Right cardiac atrium (tissue), 5 donors: ENCODE measurements at regions of chr2 and their contacts with region 1.

Region 1: GRCh38 chr2:37877457-37878315 is 47.4 kb upstream of the RMDN2 start:
- DNase-seq: no peak
- ATAC-seq: peak; percentile 65 to 71
- H3K4me3 ChIP-seq: no peak overlapping the region
- H3K27ac ChIP-seq: no peak overlapping the region
- H3K4me1 ChIP-seq: peaks cover 20% of the 10 kb centered on the region
- H3K27me3 ChIP-seq: no peaks in the 10 kb centered on the region

Region 2: GRCh38 chr2:37394796-37395555 is 482.7 kb before region 1 on chr2:
- intact Hi-C with region 1: loop called in 3 of 4 experiments (anchors 5 kb)
- DNase-seq: no peak
- ATAC-seq: peak; percentile 39 to 88
- H3K4me3 ChIP-seq: no peak overlapping the region
- H3K27ac ChIP-seq: no peak overlapping the region
- H3K4me1 ChIP-seq: no peaks in the 10 kb centered on the region
- H3K27me3 ChIP-seq: no peaks in the 10 kb centered on the region

Region 3: DNA sequence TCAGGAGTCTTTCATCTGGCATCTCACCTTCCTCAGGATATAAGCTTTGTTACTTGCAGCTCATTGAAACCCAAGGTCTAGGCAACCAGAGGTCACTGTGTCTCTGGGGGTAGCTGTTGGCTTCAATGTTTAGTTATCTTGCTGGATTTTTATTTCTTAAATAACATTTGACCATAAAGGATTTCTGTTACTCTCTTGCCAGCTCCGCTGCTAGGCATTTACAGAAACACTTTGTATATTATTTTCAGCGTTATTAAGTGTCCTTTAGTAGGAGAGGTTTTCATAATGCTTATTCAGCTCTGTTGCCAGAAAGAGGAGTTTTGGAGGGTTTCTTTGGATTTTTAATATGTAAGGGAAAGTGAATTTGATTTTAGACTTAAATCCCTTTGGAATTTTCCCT is 471.9 kb before region 1 on chr2:
- intact Hi-C with region 1: loop called in 3 of 4 experiments (anchors 5 kb)
- DNase-seq: no peak
- ATAC-seq: no peak
- H3K4me3 ChIP-seq: no peak overlapping the region
- H3K27ac ChIP-seq: no peak overlapping the region
- H3K4me1 ChIP-seq: no peaks in the 10 kb centered on the region
- H3K27me3 ChIP-seq: no peaks in the 10 kb centered on the region

Region 4: DNA sequence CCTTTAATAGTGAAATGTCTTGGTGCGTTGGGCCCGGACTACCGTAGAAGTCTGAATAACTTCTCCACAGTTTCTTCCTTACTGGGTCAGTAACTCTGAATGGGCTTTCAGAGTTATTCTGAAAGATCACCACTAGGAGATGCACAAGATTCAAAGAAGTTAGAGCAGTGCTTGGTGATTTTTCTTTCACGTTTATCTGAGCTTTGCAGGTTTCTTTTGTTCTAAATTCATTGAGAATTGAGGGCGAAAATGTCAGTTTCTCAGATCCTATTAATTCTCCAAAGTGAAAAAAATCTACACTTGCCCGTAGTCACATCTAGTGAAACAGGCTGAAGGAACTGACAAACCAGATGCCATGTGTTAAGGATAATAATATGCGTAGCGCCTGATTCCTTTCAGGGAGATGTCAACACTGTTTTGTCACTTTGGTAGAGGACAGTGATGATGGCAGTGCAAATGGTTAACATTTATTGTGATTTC is 463.2 kb before region 1 on chr2:
- intact Hi-C with region 1: loop called in 3 of 4 experiments (anchors 5 kb)
- DNase-seq: no peak
- ATAC-seq: peak; percentile 75 to 85
- H3K4me3 ChIP-seq: no peak overlapping the region
- H3K27ac ChIP-seq: no peak overlapping the region
- H3K4me1 ChIP-seq: peaks cover 2% of the 10 kb centered on the region
- H3K27me3 ChIP-seq: no peaks in the 10 kb centered on the region

Region 5: GRCh38 chr2:37558623-37559022 is 319.1 kb before region 1 on chr2:
- intact Hi-C with region 1: loop called in 1 of 4 experiments (anchors 10 kb)
- DNase-seq: peak in 2 of 3 donors; percentile 18 to 56
- ATAC-seq: peak; percentile 40 to 48
- H3K4me3 ChIP-seq: no peak overlapping the region
- H3K27ac ChIP-seq: no peak overlapping the region
- H3K4me1 ChIP-seq: no peaks in the 10 kb centered on the region
- H3K27me3 ChIP-seq: no peaks in the 10 kb centered on the region

Region 6: DNA sequence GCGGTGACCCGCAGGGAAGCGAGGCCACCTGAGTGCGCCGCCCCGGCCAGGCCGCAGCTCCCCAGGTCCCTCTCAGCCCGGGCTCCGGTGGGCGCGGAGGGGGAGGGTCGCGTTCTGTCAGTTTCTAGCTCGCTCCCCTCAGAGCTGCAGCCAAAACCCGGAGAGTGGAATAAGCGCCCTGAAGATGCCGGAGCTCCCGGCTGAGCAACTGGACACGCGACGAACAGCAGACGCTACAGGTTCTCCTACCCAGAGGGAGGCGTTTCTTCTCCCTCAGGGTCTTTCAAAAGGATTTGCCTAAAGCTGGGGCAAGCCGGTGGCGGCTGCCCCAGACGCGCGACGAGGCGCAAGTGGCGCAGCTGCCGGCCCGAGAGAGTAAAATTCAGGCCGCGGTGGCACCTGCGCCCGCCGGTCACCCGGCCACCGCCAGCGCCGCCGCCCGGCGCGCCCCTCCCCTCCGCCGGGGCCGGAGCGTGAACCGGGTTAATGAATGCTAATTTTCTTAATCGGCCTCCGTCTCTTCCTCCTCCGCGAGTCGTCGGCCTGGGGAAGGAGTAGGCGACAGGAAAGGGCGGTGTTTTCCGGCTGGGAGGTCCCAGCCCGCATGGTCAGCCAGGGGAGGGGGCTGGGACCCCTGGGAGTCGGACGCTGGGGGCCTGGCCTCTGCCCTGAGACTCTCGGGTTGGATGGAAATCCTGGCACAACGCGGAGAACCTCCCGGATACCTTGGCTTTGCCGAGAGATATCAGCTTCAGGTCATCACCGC is 205.4 kb before region 1 on chr2:
- intact Hi-C with region 1: loop called in 1 of 4 experiments (anchors 10 kb)
- DNase-seq: peak; percentile 83 to 90 (median 88)
- ATAC-seq: peak; percentile 68 to 93
- H3K4me3 ChIP-seq: peak overlapping the region; percentile 61
- H3K27ac ChIP-seq: peak overlapping the region; percentile 98
- H3K4me1 ChIP-seq: peaks cover 2% of the 10 kb centered on the region
- H3K27me3 ChIP-seq: no peaks in the 10 kb centered on the region

Region 7: DNA sequence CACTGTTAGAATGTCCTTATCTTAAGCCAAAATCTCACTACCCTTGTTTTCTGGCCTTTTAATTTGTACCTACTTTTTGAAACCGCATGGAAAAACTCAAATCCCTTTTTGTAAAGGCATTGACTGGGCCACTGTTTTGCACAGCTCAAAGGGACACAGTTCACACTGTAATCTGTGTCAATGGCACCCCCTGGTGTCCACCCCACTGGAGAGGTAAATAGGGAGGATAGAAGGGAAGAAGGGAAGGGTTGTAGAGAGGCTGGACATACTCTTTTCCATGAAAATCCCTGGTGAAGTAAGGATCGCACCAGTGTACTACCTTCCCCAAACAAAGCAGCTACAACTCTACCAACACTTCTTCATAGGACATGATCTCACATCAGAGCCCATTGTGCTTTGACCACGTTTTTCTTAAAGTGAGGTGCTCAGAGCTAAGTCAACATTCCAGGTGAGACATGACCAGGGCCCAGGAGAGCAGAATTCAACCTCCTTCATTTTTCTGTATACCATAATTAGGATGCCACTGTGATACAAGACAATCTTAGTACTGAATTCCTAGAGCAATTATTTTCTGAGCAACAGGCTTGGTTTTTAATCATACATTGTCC is 45.0 kb before region 1 on chr2:
- intact Hi-C with region 1: loop called in 3 of 4 experiments (anchors 5 kb)
- DNase-seq: peak; percentile 89 to 95 (median 92)
- ATAC-seq: peak; percentile 87
- H3K4me3 ChIP-seq: no peak overlapping the region
- H3K27ac ChIP-seq: no peak overlapping the region
- H3K4me1 ChIP-seq: peaks cover 7% of the 10 kb centered on the region
- H3K27me3 ChIP-seq: no peaks in the 10 kb centered on the region